B cell (primary cell): ENCODE measurements at regions of chr17 and their contacts with region 1.

Region 1: DNA sequence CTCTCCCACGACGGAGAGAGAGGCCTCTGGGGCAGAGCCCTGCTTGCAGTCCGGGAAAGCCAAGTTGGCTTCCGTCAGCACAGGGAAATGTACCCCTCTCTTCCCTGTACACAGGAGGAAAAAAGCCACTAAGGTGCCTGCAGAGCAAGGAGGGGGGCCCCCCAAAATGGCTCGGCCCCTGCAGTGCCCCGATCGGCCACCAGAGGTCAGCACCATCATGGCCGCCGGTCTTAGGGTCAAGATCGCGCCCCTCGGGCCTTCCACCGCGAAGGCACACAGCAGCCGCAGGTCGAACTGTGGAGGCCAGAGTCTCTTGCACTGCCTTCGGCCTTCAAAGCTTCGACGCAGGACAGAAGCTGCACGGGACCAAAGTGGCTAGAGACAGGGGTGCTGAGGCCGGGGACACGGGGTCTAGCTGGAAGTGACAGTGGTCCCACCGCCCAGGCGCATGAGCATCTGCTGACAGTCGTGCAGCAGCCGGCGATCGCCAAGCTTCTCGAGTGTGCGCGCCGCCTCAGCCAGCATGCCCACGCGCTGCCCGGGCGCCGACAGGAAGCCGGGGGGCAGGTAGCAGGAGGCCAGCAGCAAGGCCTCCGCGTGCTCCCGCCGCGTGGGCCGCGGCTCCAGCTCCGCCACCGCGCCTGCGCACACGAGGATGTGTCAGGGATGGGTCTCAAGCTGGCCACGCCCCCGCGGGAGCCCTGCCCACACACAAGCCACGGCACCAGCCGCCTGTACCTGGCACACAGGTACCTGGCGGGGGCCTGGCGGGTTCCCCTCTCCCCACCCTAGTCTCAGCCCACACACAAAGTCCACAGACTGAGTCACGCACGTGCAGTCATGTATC is 24.4 kb downstream of the SREBF1 start:
- DNase-seq: peak; percentile 82
- ATAC-seq: peak; percentile 86
- H3K4me3 ChIP-seq: no peak overlapping the region
- H3K4me3 Mint-ChIP-seq: no peak overlapping the region
- H3K27ac ChIP-seq: no peak overlapping the region
- H3K27ac Mint-ChIP-seq: no peak overlapping the region
- H3K4me1 ChIP-seq: peaks cover 0 to 9% of the 10 kb centered on the region in 2 donors
- H3K4me1 Mint-ChIP-seq: peaks cover 7% of the 10 kb centered on the region
- H3K27me3 ChIP-seq: no peaks in the 10 kb centered on the region
- H3K27me3 Mint-ChIP-seq: no peaks in the 10 kb centered on the region
- CTCF ChIP-seq: peak; percentile 100

Region 2: GRCh38 chr17:17757391-17757791 is 55.0 kb before region 1 on chr17:
- CTCF ChIA-PET with region 1: interaction called, 10 read pairs
- POLR2A ChIA-PET with region 1: no interaction called
- intact Hi-C with region 1: no loop called
- DNase-seq: peak; percentile 78
- ATAC-seq: peak; percentile 80
- H3K4me3 ChIP-seq: peak overlapping the region in 4 of 5 experiments; percentile 9 to 45 (median 37)
- H3K4me3 Mint-ChIP-seq: peak overlapping the region; percentile 78
- H3K27ac ChIP-seq: peak overlapping the region; percentile 72 to 84
- H3K27ac Mint-ChIP-seq: peak overlapping the region; percentile 93
- H3K4me1 ChIP-seq: peaks cover 55 to 65% of the 10 kb centered on the region in 2 donors
- H3K4me1 Mint-ChIP-seq: peaks cover 57% of the 10 kb centered on the region
- H3K27me3 ChIP-seq: no peaks in the 10 kb centered on the region
- H3K27me3 Mint-ChIP-seq: no peaks in the 10 kb centered on the region
- CTCF ChIP-seq: no peak

Region 3: GRCh38 chr17:17836250-17836817 is 23.9 kb after region 1 on chr17:
- CTCF ChIA-PET with region 1: interaction called, 28 read pairs
- POLR2A ChIA-PET with region 1: interaction called, 4 read pairs
- intact Hi-C with region 1: loop called (anchors 1 kb)
- DNase-seq: peak; percentile 98
- ATAC-seq: peak; percentile 69
- H3K4me3 ChIP-seq: peak overlapping the region; percentile 23 to 91 (median 89)
- H3K4me3 Mint-ChIP-seq: peak overlapping the region; percentile 88
- H3K27ac ChIP-seq: peak overlapping the region; percentile 93 to 97
- H3K27ac Mint-ChIP-seq: peak overlapping the region; percentile 91
- H3K4me1 ChIP-seq: peaks cover 45 to 64% of the 10 kb centered on the region in 2 donors
- H3K4me1 Mint-ChIP-seq: peaks cover 61% of the 10 kb centered on the region
- H3K27me3 ChIP-seq: no peaks in the 10 kb centered on the region
- H3K27me3 Mint-ChIP-seq: no peaks in the 10 kb centered on the region
- CTCF ChIP-seq: no peak

Region 4: GRCh38 chr17:17859909-17860765 is 47.7 kb after region 1 on chr17:
- CTCF ChIA-PET with region 1: interaction called, 109 read pairs
- POLR2A ChIA-PET with region 1: no interaction called
- intact Hi-C with region 1: loop called (anchors 1 kb)
- DNase-seq: peak; percentile 82
- ATAC-seq: peak; percentile 97
- H3K4me3 ChIP-seq: no peak overlapping the region
- H3K4me3 Mint-ChIP-seq: no peak overlapping the region
- H3K27ac ChIP-seq: no peak overlapping the region
- H3K27ac Mint-ChIP-seq: no peak overlapping the region
- H3K4me1 ChIP-seq: peaks cover 0 to 6% of the 10 kb centered on the region in 2 donors
- H3K4me1 Mint-ChIP-seq: no peaks in the 10 kb centered on the region
- H3K27me3 ChIP-seq: no peaks in the 10 kb centered on the region
- H3K27me3 Mint-ChIP-seq: no peaks in the 10 kb centered on the region
- CTCF ChIP-seq: peak; percentile 96

Region 5: DNA sequence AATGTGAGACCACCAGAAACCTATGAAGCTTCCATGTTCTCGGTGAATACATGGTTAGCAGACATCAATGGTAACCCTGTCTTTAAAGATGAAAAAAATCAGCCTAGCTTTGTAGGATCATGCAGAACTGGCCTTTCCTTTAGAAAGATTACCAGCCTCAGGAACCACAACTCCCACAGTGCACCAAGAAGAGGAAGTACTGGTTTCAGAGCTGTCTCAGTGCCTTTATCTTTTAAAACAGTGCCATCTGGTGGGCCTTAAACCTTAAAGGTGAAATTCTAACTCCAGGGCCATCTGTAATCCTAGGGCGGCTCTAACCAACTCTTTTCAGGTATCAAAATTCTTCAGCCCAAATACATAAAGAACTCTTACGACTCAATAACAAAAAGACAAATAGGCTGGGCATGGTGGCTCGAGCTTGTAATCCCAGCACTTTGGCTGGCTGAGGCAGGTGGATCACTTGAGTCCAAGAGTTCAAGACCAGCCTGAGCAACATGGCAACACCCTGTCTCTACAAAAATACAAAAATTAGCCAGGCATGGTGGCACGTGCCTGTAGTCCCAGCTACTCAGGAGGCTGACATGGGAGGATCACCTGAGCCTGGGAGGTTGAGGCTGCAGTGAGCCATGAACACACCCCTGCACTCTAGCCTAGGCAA is 221.1 kb after region 1 on chr17:
- CTCF ChIA-PET with region 1: interaction called, 13 read pairs
- POLR2A ChIA-PET with region 1: no interaction called
- intact Hi-C with region 1: no loop called
- DNase-seq: peak; percentile 86
- ATAC-seq: peak; percentile 72
- H3K4me3 ChIP-seq: no peak overlapping the region
- H3K4me3 Mint-ChIP-seq: no peak overlapping the region
- H3K27ac ChIP-seq: no peak overlapping the region
- H3K27ac Mint-ChIP-seq: peak overlapping the region; percentile 82
- H3K4me1 ChIP-seq: peaks cover 16 to 39% of the 10 kb centered on the region in 2 donors
- H3K4me1 Mint-ChIP-seq: peaks cover 54% of the 10 kb centered on the region
- H3K27me3 ChIP-seq: no peaks in the 10 kb centered on the region
- H3K27me3 Mint-ChIP-seq: no peaks in the 10 kb centered on the region
- CTCF ChIP-seq: peak; percentile 73